ENCODE measurements at regions of chr17 and their contacts with region 1.

Region 1: DNA sequence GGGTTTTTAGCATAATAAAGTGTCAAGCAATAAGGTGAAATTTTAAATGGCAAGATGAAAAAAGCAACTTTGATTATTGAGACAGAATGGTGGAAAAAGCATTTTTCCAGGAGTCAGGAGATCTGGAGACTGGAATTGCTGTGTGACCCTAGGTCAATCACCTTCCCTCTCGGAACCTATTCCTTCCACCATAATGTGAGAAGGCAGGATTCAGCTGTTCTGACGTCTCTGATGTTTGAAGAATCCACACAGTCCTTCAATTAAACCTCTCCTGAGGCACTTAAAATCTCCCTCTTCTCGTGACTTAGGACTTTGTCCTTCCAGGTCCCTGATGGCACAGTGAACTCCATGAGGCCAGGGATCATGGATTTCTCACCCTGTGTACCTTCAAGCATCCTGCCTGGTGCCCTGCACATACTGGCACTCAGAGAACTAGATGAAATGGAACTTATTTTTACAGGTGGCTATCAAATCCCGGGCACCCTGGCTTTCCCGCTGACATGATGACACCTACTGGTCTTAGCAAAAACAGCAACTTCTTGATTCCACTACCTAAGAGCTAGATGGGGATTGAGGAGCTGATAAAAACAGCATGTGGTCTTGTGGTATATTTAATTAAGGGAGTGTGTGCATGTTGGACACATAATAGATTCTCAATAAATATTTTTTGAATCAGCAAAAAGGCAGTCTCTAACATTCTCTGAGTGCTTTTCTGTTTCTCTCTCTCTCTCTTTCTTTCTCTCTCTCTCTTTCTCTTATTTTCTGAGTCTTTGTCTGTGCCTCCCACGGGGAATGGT is 2.3 kb upstream of the CCDC182 start:
- DNase-seq: no peak

Region 2: GRCh38 chr17:57130761-57131461 is 616.5 kb before region 1 on chr17:
- intact Hi-C with region 1: loop called (anchors 5 kb)
- DNase-seq: no peak

Region 3: DNA sequence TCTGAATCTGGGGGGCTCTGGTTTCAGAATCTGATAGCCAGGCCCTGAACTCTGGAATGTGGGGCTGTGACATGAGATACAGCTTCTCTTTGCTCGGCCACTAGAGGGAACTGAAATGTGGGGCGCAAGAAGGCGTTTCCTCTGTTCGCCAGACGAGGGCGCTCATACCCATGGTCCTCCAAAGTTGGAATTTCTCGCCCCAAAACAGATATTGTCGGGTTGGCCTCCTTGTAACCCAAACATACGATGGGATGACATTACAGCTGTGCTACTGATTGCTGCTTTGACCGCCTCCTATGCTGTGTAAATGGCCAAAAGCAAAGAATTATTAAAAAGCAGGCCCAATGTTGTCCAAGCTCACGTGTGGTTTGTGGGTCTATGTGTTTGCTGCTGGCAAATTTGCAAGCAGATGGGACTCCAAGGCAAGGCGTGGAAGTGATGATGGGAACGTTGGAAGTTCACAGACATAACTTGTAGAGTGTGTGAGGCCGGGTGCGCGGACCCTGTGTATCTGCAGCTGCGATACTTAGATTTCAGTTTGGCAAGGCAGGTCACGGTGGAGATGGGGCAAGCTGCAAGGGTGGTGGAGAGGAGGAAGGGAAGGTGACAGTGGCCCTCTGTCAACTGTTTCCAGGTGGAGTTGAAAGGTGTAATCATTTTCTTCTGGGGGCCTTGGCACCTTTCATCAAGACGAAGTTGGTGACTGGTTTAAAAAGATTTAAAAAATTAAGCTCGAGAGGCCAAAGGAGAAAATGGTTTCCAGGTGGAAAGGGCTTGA is 504.1 kb before region 1 on chr17:
- intact Hi-C with region 1: loop called (anchors 5 kb)
- DNase-seq: no peak

Region 4: GRCh38 chr17:57597531-57598453 is 149.6 kb before region 1 on chr17:
- intact Hi-C with region 1: loop called (anchors 5 kb)
- DNase-seq: no peak

Measured in cardiac septum (tissue), 1 donor.